Heart right ventricle (tissue), 16 donors: ENCODE measurements at regions of chr3 and their contacts with region 1.

Region 1: DNA sequence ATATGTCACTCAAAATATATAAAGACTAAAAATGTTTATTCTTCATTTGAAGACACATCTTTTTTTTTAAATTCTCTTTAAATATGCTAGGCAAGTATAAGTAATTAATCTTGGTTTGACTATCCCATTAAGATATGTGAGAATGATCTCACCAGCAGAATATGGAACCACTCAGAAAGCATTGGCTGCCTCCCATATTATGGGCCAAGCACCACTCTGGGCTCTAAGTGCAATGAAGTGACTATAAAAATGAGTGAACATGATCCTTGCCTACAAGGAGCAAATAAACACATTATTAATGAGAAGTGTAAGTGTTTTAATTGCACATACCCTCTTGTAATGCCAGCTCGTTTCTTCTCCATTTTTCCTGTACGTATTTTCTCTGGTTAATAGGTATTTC is 328.5 kb downstream of the NAALADL2 start:
- DNase-seq: no peak
- ATAC-seq: peak in 1 of 8 donors; percentile 67
- H3K4me3 ChIP-seq: no peak overlapping the region
- H3K27ac ChIP-seq: no peak overlapping the region
- H3K4me1 ChIP-seq: no peaks in the 10 kb centered on the region
- H3K27me3 ChIP-seq: no peaks in the 10 kb centered on the region
- CTCF ChIP-seq: no peak

Region 2: DNA sequence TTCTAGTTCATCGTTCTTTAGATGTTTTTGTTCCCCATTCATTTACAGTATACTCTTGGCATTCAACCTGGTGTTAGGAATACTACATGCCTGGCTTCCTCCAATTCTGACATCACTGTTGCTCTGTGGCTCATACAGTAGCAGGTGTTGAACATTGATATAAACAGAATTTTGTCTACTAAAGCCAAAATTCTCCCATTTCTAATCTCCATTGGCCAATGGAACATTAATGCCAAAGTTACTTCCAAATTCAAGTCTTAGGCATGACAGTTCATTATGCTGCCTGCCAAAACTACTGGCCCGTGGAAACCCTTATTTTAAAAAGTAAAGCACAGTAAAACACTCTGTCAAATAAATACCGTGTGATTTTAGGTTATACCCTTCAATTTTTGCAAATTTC is 39.5 kb after region 1 on chr3:
- intact Hi-C with region 1: loop called in 1 of 10 experiments (anchors 5 kb)
- DNase-seq: no peak
- ATAC-seq: no peak
- H3K4me3 ChIP-seq: no peak overlapping the region
- H3K27ac ChIP-seq: no peak overlapping the region
- H3K4me1 ChIP-seq: peaks cover 0 to 18% (median 3%) of the 10 kb centered on the region in 9 donors
- H3K27me3 ChIP-seq: no peaks in the 10 kb centered on the region
- CTCF ChIP-seq: no peak

Region 3: DNA sequence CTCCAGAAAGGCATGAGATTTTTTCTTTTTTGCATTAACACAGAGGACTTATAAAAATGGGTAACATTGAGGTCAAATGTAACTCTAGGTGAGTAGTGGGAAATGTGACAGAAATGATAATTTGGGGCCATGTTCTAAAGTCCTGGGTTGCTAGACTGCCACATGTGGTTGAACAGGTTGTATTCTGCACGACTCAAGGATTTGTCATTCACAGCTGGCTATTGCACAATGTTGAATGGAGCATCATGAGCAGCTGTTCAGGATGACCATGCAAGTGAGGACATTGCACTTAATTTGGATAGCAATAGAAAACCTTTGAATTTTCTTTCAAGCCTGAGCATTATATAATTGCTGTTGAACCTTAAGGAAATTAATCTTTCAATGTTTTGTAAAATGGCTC is 68.1 kb after region 1 on chr3:
- intact Hi-C with region 1: no loop called
- DNase-seq: no peak
- ATAC-seq: peak in 5 of 8 donors; percentile 46 to 84 (median 77)
- H3K4me3 ChIP-seq: no peak overlapping the region
- H3K27ac ChIP-seq: no peak overlapping the region
- H3K4me1 ChIP-seq: no peaks in the 10 kb centered on the region
- H3K27me3 ChIP-seq: no peaks in the 10 kb centered on the region
- CTCF ChIP-seq: no peak